ENCODE measurements at regions of chr16 and their contacts with region 1.

Region 1: DNA sequence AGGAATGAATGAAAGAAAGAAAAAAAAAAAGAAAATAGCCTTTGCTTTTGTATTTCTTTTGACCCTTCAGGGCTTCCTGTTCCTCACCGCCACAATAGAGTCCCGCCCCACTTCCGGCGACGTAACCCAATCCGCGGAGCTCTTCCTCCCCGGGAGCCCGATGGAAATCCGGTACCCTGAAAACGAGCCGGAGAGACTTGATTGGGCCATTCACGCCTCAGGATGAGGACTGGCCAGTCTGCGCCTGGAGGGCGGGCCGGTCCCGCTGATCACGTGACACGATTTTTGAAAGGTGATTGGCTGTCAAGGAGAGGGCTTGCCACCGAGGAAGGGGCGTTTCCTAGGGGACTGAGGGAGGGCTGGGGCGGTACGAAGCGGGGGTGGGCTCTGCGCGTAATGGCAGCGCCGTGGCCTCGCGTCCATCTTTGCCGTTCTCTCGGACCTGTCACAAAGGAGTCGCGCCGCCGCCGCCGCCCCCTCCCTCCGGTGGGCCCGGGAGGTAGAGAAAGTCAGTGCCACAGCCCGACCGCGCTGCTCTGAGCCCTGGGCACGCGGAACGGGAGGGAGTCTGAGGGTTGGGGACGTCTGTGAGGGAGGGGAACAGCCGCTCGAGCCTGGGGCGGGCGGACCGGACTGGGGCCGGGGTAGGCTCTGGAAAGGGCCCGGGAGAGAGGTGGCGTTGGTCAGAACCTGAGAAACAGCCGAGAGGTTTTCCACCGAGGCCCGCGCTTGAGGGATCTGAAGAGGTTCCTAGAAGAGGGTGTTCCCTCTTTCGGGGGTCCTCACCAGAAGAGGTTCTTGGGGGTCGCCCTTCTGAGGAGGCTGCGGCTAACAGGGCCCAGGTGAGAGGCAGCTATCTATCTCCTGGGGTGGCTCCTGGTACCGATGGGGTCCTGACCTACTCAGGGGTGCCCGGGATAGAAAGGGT is at the starts of genes PSME3IP1 and RSPRY1:
- DNase-seq: peak; percentile 99
- ATAC-seq: peak; percentile 96
- H3K4me3 Mint-ChIP-seq: peak within 1 kb of the TSS; percentile 100
- H3K27ac Mint-ChIP-seq: peak within 1 kb of the TSS; percentile 97
- H3K4me1 Mint-ChIP-seq: peaks cover 37% of the 10 kb centered on the region
- H3K27me3 Mint-ChIP-seq: no peaks in the 10 kb centered on the region
- total RNA-seq, gene PSME3IP1: 111 to 156 TPM
- total RNA-seq, gene RSPRY1: 24.6 to 30.2 TPM

Region 2: GRCh38 chr16:56729735-56730662 is 456.2 kb before region 1 on chr16 and contains the start of gene NUP93:
- CTCF ChIA-PET with region 1: no interaction called
- POLR2A ChIA-PET with region 1: no interaction called
- intact Hi-C with region 1: loop called in 1 of 2 experiments (anchors 2 kb)
- DNase-seq: peak; percentile 95
- ATAC-seq: peak; percentile 83
- H3K4me3 Mint-ChIP-seq: no peak within 1 kb of the TSS
- H3K27ac Mint-ChIP-seq: peak within 1 kb of the TSS; percentile 85
- H3K4me1 Mint-ChIP-seq: peaks cover 14% of the 10 kb centered on the region
- H3K27me3 Mint-ChIP-seq: no peaks in the 10 kb centered on the region
- total RNA-seq, gene NUP93: 131 to 154 TPM

Region 3: DNA sequence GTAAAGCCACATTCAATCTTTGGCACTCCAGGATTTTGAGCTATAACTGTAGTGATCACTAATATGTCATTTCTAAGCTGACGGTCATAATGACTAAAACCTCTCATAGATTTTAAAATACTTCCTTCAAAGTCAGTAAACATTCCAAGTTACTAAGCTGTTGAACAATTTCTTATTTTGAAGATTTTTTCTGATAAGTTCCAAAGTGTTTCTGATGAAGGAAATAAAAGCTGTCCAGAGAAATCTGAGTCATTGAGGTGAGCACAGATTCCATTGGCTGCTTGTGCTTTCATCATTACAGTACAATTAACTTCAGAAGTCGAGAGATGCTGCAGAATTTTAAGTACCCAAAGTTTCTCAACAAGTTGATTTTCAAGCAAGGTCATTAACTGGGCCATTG is 173.0 kb before region 1 on chr16:
- CTCF ChIA-PET with region 1: no interaction called
- POLR2A ChIA-PET with region 1: no interaction called
- intact Hi-C with region 1: loop called in 1 of 2 experiments (anchors 1 kb)
- DNase-seq: no peak
- ATAC-seq: no peak
- H3K4me3 Mint-ChIP-seq: peak overlapping the region; percentile 19
- H3K27ac Mint-ChIP-seq: peak overlapping the region; percentile 95
- H3K4me1 Mint-ChIP-seq: peaks cover 85% of the 10 kb centered on the region
- H3K27me3 Mint-ChIP-seq: no peaks in the 10 kb centered on the region

Region 4: DNA sequence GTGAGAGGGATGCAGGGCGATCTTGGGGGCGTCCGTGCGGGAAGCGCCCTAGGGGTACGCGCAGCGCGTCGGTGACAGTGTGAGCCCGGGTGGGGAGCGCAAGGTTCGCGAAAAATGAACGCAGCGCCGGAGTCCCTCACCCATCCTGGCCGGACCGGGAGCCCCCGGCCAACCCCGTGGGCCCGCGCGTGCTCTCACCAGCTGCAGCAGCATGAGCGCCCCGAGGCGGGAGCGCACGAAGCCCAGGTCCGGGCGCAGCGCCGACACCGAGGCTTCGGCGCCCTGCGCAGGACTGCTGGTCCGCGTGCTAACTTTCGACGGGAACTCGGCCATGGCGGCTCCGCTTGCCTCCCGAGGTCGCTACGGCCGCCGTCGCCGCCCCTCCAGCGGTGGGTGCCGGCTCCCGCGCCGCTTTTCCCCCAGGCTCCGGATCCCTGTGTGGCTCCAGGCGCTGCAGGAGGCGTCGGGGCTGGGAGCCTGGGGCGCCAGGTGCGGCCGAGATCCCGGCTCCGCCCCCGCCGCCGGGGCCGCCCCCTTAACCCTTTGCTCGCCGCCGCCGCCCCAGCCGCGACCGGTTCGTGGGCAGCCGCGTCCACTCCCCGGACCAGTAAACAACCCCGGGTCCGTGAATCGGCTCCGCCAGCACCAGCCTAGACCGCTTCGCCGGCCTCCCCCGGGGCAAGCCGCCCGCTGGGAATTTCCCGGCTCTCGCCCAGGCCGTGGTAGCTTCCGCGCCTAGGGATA is 98.2 kb after region 1 on chr16 and contains the start of gene PLLP:
- CTCF ChIA-PET with region 1: no interaction called
- POLR2A ChIA-PET with region 1: no interaction called
- intact Hi-C with region 1: loop called in 1 of 2 experiments (anchors 10 kb)
- DNase-seq: peak; percentile 53
- ATAC-seq: peak; percentile 56
- H3K4me3 Mint-ChIP-seq: peak within 1 kb of the TSS; percentile 73
- H3K27ac Mint-ChIP-seq: peak within 1 kb of the TSS; percentile 42
- H3K4me1 Mint-ChIP-seq: peaks cover 26% of the 10 kb centered on the region
- H3K27me3 Mint-ChIP-seq: no peaks in the 10 kb centered on the region
- total RNA-seq, gene PLLP: 0.30 to 0.33 TPM

Region 5: GRCh38 chr16:57427824-57428223 is 241.6 kb after region 1 on chr16:
- CTCF ChIA-PET with region 1: no interaction called
- POLR2A ChIA-PET with region 1: no interaction called
- intact Hi-C with region 1: no loop called
- DNase-seq: no peak
- ATAC-seq: no peak
- H3K4me3 Mint-ChIP-seq: no peak overlapping the region
- H3K27ac Mint-ChIP-seq: no peak overlapping the region
- H3K4me1 Mint-ChIP-seq: peaks cover 5% of the 10 kb centered on the region
- H3K27me3 Mint-ChIP-seq: no peaks in the 10 kb centered on the region

Region 6: DNA sequence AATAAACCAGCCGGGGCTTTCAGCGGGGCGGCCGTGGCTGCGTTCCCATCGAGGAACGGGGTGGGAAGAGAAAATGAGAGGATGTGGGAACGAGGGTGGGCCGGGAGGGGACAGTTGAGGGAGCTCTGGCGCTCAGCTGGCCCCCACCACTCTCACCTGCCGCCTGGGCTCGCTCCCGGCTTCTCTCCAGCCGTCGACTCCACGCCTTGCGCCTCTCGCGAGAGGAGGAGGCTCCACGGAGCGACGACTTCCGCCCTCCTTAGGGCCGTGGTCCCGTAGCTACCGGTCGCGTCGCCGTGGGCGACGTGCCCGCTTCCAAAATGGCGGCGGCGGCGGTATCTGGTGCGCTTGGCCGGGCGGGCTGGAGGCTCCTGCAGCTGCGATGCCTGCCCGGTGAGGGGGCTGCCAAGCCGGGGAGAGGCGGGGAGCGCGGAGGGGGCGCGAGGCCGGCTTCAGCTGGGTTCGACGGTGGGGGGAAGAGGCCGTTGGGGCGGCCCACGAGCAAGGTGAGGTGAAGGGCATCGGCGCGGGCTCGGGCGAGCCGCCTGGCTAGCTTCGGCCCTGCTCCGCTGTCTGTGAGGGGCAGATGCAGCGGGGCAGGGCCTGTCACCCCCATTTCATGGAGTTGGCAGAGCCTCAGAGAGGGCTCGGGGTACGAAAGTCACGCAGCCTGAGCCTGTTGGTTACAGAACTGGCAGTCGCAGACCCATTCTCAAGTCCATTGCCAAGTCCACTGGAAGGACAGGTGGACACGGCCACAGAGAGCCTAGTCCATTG is 261.2 kb after region 1 on chr16 and contains the starts of genes CIAPIN1 and COQ9:
- CTCF ChIA-PET with region 1: no interaction called
- POLR2A ChIA-PET with region 1: interaction called, 7 read pairs
- intact Hi-C with region 1: loop called in 1 of 2 experiments (anchors 1 kb)
- DNase-seq: peak; percentile 96
- ATAC-seq: peak; percentile 99
- H3K4me3 Mint-ChIP-seq: peak within 1 kb of the TSS; percentile 91
- H3K27ac Mint-ChIP-seq: peak within 1 kb of the TSS; percentile 85
- H3K4me1 Mint-ChIP-seq: peaks cover 32% of the 10 kb centered on the region
- H3K27me3 Mint-ChIP-seq: no peaks in the 10 kb centered on the region
- total RNA-seq, gene CIAPIN1: 41.7 to 42.6 TPM
- total RNA-seq, gene COQ9: 39.4 to 52.1 TPM

Region 7: DNA sequence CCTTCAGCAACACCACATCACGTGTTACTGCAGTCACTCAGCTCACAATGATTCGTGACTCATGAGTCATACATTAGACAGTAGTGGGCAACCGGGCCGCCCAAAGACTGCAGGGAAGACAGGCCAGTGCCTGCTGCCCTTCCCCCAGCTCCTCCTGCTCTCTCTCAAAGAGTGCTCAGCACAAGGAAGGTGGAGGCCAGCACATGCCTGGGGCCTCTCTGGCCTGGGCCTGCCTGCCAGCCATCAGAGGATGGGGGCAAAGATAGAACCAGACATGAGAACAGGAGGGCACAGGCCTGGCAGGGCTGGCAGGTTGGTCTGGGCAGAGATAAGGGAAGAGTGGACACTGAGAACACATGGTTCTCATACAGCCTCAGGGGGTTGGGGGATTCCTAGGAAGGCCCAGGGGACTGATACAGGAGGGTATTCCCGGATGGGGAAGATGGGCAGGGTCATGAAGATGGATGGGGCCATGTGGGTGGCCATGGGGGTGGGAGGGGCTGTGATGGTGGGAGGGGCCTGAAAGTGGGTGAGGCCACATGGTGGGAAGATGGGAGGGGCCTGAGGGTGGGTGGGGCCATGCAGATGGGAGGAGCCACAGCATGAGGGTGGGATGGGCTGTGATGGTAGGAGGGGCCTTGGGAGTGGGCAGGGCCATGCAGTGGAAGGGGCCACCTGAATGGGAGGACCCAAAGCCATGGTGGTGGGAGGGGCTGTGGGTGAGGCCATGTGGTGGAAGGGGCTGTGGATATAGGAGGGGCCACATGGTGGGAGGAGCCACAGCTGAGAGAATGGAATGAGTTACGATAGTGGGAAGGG is 578.3 kb after region 1 on chr16:
- CTCF ChIA-PET with region 1: no interaction called
- POLR2A ChIA-PET with region 1: no interaction called
- intact Hi-C with region 1: no loop called
- DNase-seq: peak; percentile 65
- ATAC-seq: peak; percentile 90
- H3K4me3 Mint-ChIP-seq: no peak overlapping the region
- H3K27ac Mint-ChIP-seq: no peak overlapping the region
- H3K4me1 Mint-ChIP-seq: no peaks in the 10 kb centered on the region
- H3K27me3 Mint-ChIP-seq: no peaks in the 10 kb centered on the region

Region 8: GRCh38 chr16:58198022-58198683 is 1011.9 kb after region 1 on chr16 and contains the start of gene CSNK2A2:
- CTCF ChIA-PET with region 1: no interaction called
- POLR2A ChIA-PET with region 1: no interaction called
- intact Hi-C with region 1: loop called in 1 of 2 experiments (anchors 5 kb)
- DNase-seq: peak; percentile 84
- ATAC-seq: peak; percentile 94
- H3K4me3 Mint-ChIP-seq: peak within 1 kb of the TSS; percentile 84
- H3K27ac Mint-ChIP-seq: peak within 1 kb of the TSS; percentile 74
- H3K4me1 Mint-ChIP-seq: peaks cover 34% of the 10 kb centered on the region
- H3K27me3 Mint-ChIP-seq: peaks cover 6% of the 10 kb centered on the region
- total RNA-seq, gene CSNK2A2: 85.9 to 92.2 TPM

Measured in activated CD4-positive, alpha-beta T cell treated with anti-CD3 and anti-CD28 coated beads for 36 hours (primary cell).